MCF 10A (cell line): ENCODE measurements at regions of chr3 and their contacts with region 1.

Region 1: DNA sequence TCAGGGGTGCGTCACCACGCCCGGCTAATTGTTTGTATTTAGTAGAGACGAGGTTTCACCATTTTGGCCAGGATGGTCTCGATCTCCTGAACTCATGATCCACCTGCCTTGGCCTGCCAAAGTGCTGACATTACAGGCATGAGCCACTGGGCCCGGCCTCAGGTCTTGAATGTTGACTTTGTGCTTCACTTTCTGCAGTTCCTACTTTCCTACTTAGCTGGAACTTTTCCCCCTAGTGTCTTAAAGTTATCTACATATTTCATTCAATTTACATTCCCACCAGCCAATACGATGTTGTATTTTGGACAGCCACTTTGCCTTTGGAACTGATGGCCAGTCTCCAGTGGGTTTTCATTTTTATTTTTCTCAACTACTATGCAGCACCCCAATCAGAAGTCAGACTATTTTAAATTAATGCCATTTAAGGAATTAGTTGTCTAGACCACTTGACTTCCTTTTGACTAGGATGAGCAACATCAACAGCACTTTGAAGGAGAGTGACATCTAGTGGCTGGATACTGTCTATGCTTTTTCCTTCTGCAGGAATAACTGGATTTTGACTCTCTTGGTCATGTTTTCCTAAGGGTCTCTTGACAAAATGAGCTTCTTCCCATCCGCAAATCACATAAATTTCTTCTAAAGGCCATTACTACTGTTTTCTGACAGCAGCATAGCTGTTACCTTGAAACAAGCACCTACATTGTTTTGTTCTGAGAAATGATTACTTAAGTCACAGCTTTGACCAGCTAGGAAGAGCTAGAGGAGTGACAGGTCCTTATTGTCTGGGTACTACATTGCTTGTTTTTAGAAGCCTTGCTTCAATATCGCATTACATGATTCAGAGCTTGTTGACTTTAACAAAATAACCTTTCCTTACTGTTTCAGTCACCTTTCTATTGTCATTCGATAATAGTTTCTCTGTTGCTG is 140.2 kb downstream of the ITPR1 start:
- DNase-seq: peak; percentile 63
- H3K4me3 Mint-ChIP-seq: no peak overlapping the region
- H3K27ac Mint-ChIP-seq: no peak overlapping the region
- H3K4me1 Mint-ChIP-seq: no peaks in the 10 kb centered on the region
- H3K27me3 Mint-ChIP-seq: no peaks in the 10 kb centered on the region
- CTCF ChIP-seq: peak; percentile 79

Region 2: GRCh38 chr3:4322635-4323034 is 310.7 kb before region 1 on chr3:
- CTCF ChIA-PET with region 1: interaction called, 16 read pairs
- POLR2A ChIA-PET with region 1: no interaction called
- intact Hi-C with region 1: no loop called
- DNase-seq: peak; percentile 95
- H3K4me3 Mint-ChIP-seq: no peak overlapping the region
- H3K27ac Mint-ChIP-seq: peak overlapping the region; percentile 71
- H3K4me1 Mint-ChIP-seq: peaks cover 8% of the 10 kb centered on the region
- H3K27me3 Mint-ChIP-seq: no peaks in the 10 kb centered on the region
- CTCF ChIP-seq: no peak

Region 3: GRCh38 chr3:4350789-4351163 is 282.6 kb before region 1 on chr3:
- CTCF ChIA-PET with region 1: interaction called, 288 read pairs
- POLR2A ChIA-PET with region 1: interaction called, 7 read pairs
- intact Hi-C with region 1: loop called (anchors 1 kb)
- DNase-seq: peak; percentile 68
- H3K4me3 Mint-ChIP-seq: no peak overlapping the region
- H3K27ac Mint-ChIP-seq: no peak overlapping the region
- H3K4me1 Mint-ChIP-seq: peaks cover 7% of the 10 kb centered on the region
- H3K27me3 Mint-ChIP-seq: no peaks in the 10 kb centered on the region
- CTCF ChIP-seq: peak; percentile 67

Region 4: DNA sequence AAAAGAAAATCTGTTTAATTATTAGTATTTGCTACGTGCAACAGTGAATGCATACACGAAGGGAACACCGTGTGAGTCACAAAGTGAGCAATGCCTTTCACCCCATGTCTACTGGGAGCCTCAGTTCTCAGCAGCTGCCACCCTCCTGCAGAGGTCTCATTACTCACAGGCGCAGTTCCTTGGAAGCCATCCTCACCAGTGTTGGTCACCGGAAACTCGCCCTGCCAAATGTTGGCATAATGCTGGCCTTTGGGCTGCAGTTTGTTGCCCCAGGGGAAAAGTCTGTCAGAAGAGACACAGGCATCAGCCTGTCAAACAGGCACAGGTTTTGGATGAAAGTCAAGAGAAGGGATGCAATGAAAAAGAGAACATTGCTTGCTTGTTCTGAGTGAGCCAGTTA is 216.4 kb before region 1 on chr3:
- CTCF ChIA-PET with region 1: interaction called, 9 read pairs
- POLR2A ChIA-PET with region 1: interaction called, 4 read pairs
- intact Hi-C with region 1: loop called (anchors 5 kb)
- DNase-seq: peak; percentile 100
- H3K4me3 Mint-ChIP-seq: no peak overlapping the region
- H3K27ac Mint-ChIP-seq: peak overlapping the region; percentile 44
- H3K4me1 Mint-ChIP-seq: peaks cover 14% of the 10 kb centered on the region
- H3K27me3 Mint-ChIP-seq: no peaks in the 10 kb centered on the region
- CTCF ChIP-seq: no peak

Region 5: GRCh38 chr3:4493014-4493940 is 140.1 kb before region 1 on chr3 and contains the start of gene ITPR1:
- CTCF ChIA-PET with region 1: interaction called, 32 read pairs
- POLR2A ChIA-PET with region 1: interaction called, 9 read pairs
- intact Hi-C with region 1: loop called (anchors 1 kb)
- DNase-seq: peak; percentile 98
- H3K4me3 Mint-ChIP-seq: peak within 1 kb of the TSS; percentile 85
- H3K27ac Mint-ChIP-seq: peak within 1 kb of the TSS; percentile 64
- H3K4me1 Mint-ChIP-seq: peaks cover 6% of the 10 kb centered on the region
- H3K27me3 Mint-ChIP-seq: no peaks in the 10 kb centered on the region
- CTCF ChIP-seq: no peak
- total RNA-seq, gene ITPR1: 7.5 and 14.3 TPM in 2 replicates

Region 6: DNA sequence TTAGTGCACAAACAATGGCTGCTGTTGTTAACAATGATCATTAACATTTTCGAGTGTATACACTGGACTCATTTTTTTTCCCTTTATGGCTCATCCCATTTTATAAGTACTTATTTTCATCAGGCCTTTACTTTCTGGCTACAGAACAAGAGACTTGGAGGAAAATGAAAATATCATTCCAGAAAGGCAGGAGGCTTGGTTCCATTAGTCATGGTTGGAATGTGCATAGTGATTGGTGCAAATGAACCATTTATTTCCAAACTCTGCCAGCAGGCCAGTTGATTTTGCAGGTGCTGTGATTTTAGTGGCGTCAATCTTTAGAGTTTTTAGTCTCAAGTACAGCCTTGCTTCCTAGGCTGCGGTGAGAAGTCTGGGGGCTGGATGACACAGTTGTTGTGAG is 11.6 kb after region 1 on chr3:
- CTCF ChIA-PET with region 1: interaction called, 33 read pairs
- POLR2A ChIA-PET with region 1: no interaction called
- intact Hi-C with region 1: no loop called
- DNase-seq: no peak
- H3K4me3 Mint-ChIP-seq: no peak overlapping the region
- H3K27ac Mint-ChIP-seq: no peak overlapping the region
- H3K4me1 Mint-ChIP-seq: no peaks in the 10 kb centered on the region
- H3K27me3 Mint-ChIP-seq: no peaks in the 10 kb centered on the region
- CTCF ChIP-seq: no peak